ENCODE measurements at regions of chr3 and their contacts with region 1.

Region 1: GRCh38 chr3:42013691-42014457 is 52.0 kb upstream of the ULK4 start:
- DNase-seq: peak; percentile 39
- ATAC-seq: peak; percentile 16
- H3K4me3 Mint-ChIP-seq: peak overlapping the region; percentile 77
- H3K27ac Mint-ChIP-seq: 0 out of 2 replicates have a peak overlapping the region, but pooled peaks have one; percentile 75
- H3K4me1 Mint-ChIP-seq: peaks cover 22% of the 10 kb centered on the region
- H3K27me3 Mint-ChIP-seq: peaks cover 11% of the 10 kb centered on the region
- CTCF ChIP-seq: no peak

Region 2: GRCh38 chr3:41997702-41998550 is 15.9 kb before region 1 on chr3:
- CTCF ChIA-PET with region 1: interaction called, 21 read pairs
- POLR2A ChIA-PET with region 1: no interaction called
- DNase-seq: peak; percentile 40
- ATAC-seq: peak; percentile 90
- H3K4me3 Mint-ChIP-seq: no peak overlapping the region
- H3K27ac Mint-ChIP-seq: no peak overlapping the region
- H3K4me1 Mint-ChIP-seq: peaks cover 5% of the 10 kb centered on the region
- H3K27me3 Mint-ChIP-seq: peaks cover 2% of the 10 kb centered on the region; the same call in 1 of the 2 replicates
- CTCF ChIP-seq: no peak

Region 3: DNA sequence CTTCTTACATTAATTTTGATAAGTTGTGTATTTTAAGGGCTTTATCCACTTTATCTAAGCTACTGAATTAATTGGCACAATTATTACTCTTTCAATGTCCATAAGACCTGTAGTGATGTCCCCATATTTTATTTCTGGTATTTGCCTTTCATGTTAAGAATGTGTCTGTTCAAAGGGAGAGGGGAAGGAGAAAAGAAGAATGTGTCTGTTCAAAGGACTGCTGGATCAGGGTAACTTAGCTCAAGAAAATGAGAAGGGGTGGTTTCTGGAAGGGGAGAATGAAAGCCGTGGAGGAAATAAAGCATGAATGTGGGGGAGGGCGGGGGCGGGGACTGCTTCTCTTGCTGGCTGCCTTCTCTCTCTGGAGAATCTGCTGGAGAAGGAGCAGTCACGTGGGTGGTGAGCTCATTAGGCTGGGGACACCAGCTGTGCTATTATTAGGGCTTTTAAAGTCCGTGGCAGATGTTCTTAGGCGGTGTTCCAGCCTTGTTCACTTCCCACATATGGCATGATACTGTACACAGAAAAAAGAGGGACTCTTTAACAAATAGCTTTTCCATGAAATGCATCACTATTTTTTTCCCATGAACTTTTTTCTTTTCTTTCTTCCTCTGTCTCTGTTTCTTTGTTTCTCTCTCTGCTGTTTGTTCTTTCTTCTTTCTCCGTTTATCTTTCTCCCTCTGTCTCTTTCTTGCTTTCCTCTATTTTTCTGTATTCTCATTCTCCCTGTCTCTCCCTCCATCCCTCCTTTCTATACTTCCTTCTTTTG is 11.7 kb after region 1 on chr3:
- CTCF ChIA-PET with region 1: interaction called, 7 read pairs
- POLR2A ChIA-PET with region 1: interaction called, 13 read pairs
- DNase-seq: peak; percentile 67
- ATAC-seq: peak; percentile 68
- H3K4me3 Mint-ChIP-seq: peak overlapping the region; percentile 61
- H3K27ac Mint-ChIP-seq: peak overlapping the region; percentile 98
- H3K4me1 Mint-ChIP-seq: peaks cover 55% of the 10 kb centered on the region
- H3K27me3 Mint-ChIP-seq: no peaks in the 10 kb centered on the region
- CTCF ChIP-seq: no peak

Region 4: GRCh38 chr3:42101048-42101447 is 87.2 kb after region 1 on chr3:
- CTCF ChIA-PET with region 1: interaction called, 15 read pairs
- POLR2A ChIA-PET with region 1: no interaction called
- DNase-seq: no peak
- ATAC-seq: no peak
- H3K4me3 Mint-ChIP-seq: no peak overlapping the region
- H3K27ac Mint-ChIP-seq: peak overlapping the region; percentile 26; the same call in 1 of the 2 replicates
- H3K4me1 Mint-ChIP-seq: peaks cover 35% of the 10 kb centered on the region
- H3K27me3 Mint-ChIP-seq: no peaks in the 10 kb centered on the region
- CTCF ChIP-seq: no peak; the same call in 1 of the 2 replicates